Activated T-helper 1 cell treated with anti-CD3 and anti-CD28 coated beads, Interleukin-12 subunit alpha, Interleukin-12 subunit beta, Interleukin-2, Interleukin-4 antibody, amounts not matched to agents 30 ng/mL and 10 ng/mL and 1 ng/mL, durations not matched to agents 14 hours and 24 hours and 36 hours (primary cell): ENCODE measurements at regions of chr1 and their contacts with region 1.

Region 1: DNA sequence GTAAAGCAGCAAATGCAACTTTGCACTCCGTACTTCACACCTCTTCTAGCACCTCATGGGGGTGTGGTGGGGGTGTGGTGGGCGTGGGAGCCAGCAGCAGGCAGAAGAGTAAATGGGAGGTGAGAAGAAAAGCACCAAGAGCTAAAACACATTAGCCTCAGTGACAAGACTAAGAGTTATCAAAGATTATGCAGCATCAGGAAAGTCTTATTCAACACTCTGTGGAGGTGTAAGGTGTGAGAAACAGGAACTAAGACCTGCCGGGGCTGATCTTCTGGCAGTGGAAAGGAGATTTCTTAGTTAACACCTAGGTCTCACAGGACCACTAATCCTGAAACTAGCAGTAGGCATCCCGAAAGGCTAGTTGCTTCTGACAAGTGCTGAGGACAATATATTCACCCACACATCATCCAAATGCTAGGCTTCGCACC is 9.9 kb downstream of the TGFBR3 start:
- DNase-seq: no peak
- H3K4me3 Mint-ChIP-seq: peak overlapping the region; percentile 37
- H3K27ac Mint-ChIP-seq: peak overlapping the region; percentile 71
- H3K4me1 Mint-ChIP-seq: peaks cover 72% of the 10 kb centered on the region
- H3K27me3 Mint-ChIP-seq: peaks cover 6% of the 10 kb centered on the region

Region 2: DNA sequence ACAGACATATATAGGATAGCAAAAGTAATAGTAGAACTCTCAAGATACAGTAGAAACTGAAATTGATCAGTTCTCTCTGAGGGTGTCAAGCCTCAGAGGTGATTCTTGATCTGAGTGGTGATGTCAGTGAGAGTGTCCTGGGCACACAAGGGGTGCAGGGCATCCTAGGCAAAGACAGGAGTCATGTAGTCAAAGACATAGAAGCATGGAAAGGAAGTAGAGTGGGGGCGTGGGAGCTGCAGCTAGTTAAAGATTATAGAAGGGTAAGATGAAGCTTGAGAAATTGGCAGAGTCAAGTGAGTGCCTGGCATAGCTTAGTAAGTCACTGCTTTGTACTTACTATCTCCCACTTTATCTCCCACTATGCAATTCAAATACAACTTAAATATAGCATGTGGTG is 352.6 kb before region 1 on chr1:
- intact Hi-C with region 1: loop called (anchors 2 kb)
- DNase-seq: no peak
- H3K4me3 Mint-ChIP-seq: no peak overlapping the region
- H3K27ac Mint-ChIP-seq: peak overlapping the region; percentile 33
- H3K4me1 Mint-ChIP-seq: peaks cover 41% of the 10 kb centered on the region
- H3K27me3 Mint-ChIP-seq: no peaks in the 10 kb centered on the region

Region 3: DNA sequence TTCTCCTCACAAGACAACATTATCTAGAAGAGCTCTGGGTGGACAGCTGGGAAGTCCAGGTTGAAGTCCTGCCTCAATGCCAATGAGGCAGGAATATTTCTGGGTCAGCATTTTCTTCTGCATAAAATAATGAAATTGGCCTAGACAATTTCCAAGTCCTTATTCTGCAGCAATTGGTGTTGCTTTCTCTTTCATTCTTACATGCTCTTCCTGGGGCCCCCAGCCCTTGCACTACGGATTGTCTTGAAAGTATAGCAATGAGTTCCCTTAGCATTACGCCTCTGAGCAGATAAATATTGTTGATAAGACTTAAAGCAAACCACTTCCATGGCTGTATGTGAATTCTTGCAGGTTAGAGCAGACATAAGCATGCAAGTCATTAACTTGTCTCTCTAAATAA is 178.6 kb before region 1 on chr1:
- intact Hi-C with region 1: loop called (anchors 1 kb)
- DNase-seq: peak; percentile 69
- H3K4me3 Mint-ChIP-seq: peak overlapping the region; percentile 72
- H3K27ac Mint-ChIP-seq: peak overlapping the region; percentile 86
- H3K4me1 Mint-ChIP-seq: peaks cover 41% of the 10 kb centered on the region
- H3K27me3 Mint-ChIP-seq: peaks cover 1% of the 10 kb centered on the region

Region 4: GRCh38 chr1:91732291-91733107 is 143.6 kb before region 1 on chr1:
- intact Hi-C with region 1: loop called (anchors 1 kb)
- DNase-seq: no peak
- H3K4me3 Mint-ChIP-seq: no peak overlapping the region
- H3K27ac Mint-ChIP-seq: peak overlapping the region; percentile 37
- H3K4me1 Mint-ChIP-seq: peaks cover 51% of the 10 kb centered on the region
- H3K27me3 Mint-ChIP-seq: peaks cover 8% of the 10 kb centered on the region

Region 5: GRCh38 chr1:91761295-91761721 is 114.7 kb before region 1 on chr1:
- intact Hi-C with region 1: no loop called
- DNase-seq: no peak
- H3K4me3 Mint-ChIP-seq: no peak overlapping the region
- H3K27ac Mint-ChIP-seq: no peak overlapping the region
- H3K4me1 Mint-ChIP-seq: peaks cover 7% of the 10 kb centered on the region
- H3K27me3 Mint-ChIP-seq: peaks cover 7% of the 10 kb centered on the region

Region 6: GRCh38 chr1:92583821-92584760 is 708.0 kb after region 1 on chr1:
- intact Hi-C with region 1: loop called (anchors 2 kb)
- DNase-seq: no peak
- H3K4me3 Mint-ChIP-seq: peak overlapping the region; percentile 62
- H3K27ac Mint-ChIP-seq: peak overlapping the region; percentile 91
- H3K4me1 Mint-ChIP-seq: peaks cover 75% of the 10 kb centered on the region
- H3K27me3 Mint-ChIP-seq: no peaks in the 10 kb centered on the region